Activated CD4-positive, alpha-beta T cell treated with anti-CD3 and anti-CD28 coated beads, Interleukin-2, amount 10 ng/mL, durations not matched to agents 24 days and 14 days (primary cell): ENCODE measurements at regions of chr3 and their contacts with region 1.

Region 1: GRCh38 chr3:164208821-164209220 is 869.5 kb downstream of the SI start:
- DNase-seq: no peak
- H3K4me3 Mint-ChIP-seq: no peak overlapping the region
- H3K27ac Mint-ChIP-seq: no peak overlapping the region
- H3K4me1 Mint-ChIP-seq: no peaks in the 10 kb centered on the region
- H3K27me3 Mint-ChIP-seq: no peaks in the 10 kb centered on the region

Region 2: GRCh38 chr3:164250926-164251325 is 42.1 kb after region 1 on chr3:
- intact Hi-C with region 1: loop called (anchors 1 kb)
- DNase-seq: no peak
- H3K4me3 Mint-ChIP-seq: no peak overlapping the region
- H3K27ac Mint-ChIP-seq: no peak overlapping the region
- H3K4me1 Mint-ChIP-seq: no peaks in the 10 kb centered on the region
- H3K27me3 Mint-ChIP-seq: no peaks in the 10 kb centered on the region

Region 3: DNA sequence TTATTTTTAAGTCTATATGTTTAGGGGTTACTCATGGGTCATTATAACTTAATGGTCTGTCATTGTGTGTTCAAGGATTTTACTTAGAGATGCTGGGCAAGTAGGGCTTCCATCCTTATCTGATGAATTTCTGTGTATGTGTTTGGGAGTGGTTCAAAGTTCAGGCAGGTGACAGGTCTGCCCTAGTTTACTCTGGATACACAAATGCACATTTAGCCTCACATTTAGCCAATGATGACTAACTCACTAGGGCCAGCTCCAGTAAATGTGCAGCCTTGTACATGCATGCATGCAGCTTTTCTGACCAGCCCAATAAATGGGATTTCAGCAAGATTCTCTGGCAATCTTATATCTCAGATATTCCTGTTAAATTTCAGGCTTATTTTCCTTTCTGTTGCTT is 315.4 kb after region 1 on chr3:
- intact Hi-C with region 1: no loop called
- DNase-seq: no peak
- H3K4me3 Mint-ChIP-seq: no peak overlapping the region
- H3K27ac Mint-ChIP-seq: no peak overlapping the region
- H3K4me1 Mint-ChIP-seq: no peaks in the 10 kb centered on the region
- H3K27me3 Mint-ChIP-seq: no peaks in the 10 kb centered on the region